ENCODE measurements at regions of chr2 and their contacts with region 1.

Region 1: GRCh38 chr2:164782323-164782722 is 59.3 kb downstream of the COBLL1 start:
- DNase-seq: peak; percentile 54
- H3K4me3 ChIP-seq: no peak overlapping the region
- H3K27ac ChIP-seq: no peak overlapping the region
- H3K4me1 ChIP-seq: peaks cover 42% of the 10 kb centered on the region
- H3K27me3 ChIP-seq: no peaks in the 10 kb centered on the region
- CTCF ChIP-seq: no peak
- POLR2A ChIP-seq: no peak

Region 2: DNA sequence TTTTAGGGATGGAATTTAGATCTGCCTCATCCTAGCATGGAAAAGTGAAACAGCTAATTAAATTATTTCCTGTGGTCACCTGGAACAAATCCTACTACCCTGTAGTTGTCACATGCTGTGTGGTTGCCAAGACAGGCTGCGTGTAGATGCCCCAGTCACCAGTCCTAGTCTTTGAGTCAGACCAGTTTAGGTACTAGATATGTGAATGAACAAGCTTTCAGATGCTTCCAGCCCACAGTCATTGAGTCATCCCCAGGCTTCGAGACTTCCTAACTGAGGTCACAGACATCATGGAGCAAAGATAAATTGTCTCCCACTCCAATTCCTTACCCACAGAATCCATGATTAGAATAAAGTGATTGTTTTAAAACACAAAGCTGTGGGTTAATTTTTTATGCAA is 125.2 kb before region 1 on chr2:
- CTCF ChIA-PET with region 1: no interaction called
- POLR2A ChIA-PET with region 1: no interaction called
- dilution Hi-C with region 1: no loop called
- intact Hi-C with region 1: no loop called
- DNase-seq: no peak
- H3K4me3 ChIP-seq: no peak overlapping the region
- H3K27ac ChIP-seq: no peak overlapping the region
- H3K4me1 ChIP-seq: peaks cover 5% of the 10 kb centered on the region
- H3K27me3 ChIP-seq: no peaks in the 10 kb centered on the region
- CTCF ChIP-seq: no peak
- POLR2A ChIP-seq: no peak

Region 3: GRCh38 chr2:164770421-164770916 is 11.9 kb before region 1 on chr2:
- CTCF ChIA-PET with region 1: interaction called, 4 read pairs
- POLR2A ChIA-PET with region 1: no interaction called
- dilution Hi-C with region 1: no loop called
- intact Hi-C with region 1: loop called (anchors 1 kb)
- DNase-seq: peak; percentile 84
- H3K4me3 ChIP-seq: peak overlapping the region in 1 of 3 experiments; percentile 55
- H3K27ac ChIP-seq: peak overlapping the region; percentile 67
- H3K4me1 ChIP-seq: peaks cover 18% of the 10 kb centered on the region
- H3K27me3 ChIP-seq: no peaks in the 10 kb centered on the region
- CTCF ChIP-seq: no peak
- POLR2A ChIP-seq: peak; percentile 54

Region 4: DNA sequence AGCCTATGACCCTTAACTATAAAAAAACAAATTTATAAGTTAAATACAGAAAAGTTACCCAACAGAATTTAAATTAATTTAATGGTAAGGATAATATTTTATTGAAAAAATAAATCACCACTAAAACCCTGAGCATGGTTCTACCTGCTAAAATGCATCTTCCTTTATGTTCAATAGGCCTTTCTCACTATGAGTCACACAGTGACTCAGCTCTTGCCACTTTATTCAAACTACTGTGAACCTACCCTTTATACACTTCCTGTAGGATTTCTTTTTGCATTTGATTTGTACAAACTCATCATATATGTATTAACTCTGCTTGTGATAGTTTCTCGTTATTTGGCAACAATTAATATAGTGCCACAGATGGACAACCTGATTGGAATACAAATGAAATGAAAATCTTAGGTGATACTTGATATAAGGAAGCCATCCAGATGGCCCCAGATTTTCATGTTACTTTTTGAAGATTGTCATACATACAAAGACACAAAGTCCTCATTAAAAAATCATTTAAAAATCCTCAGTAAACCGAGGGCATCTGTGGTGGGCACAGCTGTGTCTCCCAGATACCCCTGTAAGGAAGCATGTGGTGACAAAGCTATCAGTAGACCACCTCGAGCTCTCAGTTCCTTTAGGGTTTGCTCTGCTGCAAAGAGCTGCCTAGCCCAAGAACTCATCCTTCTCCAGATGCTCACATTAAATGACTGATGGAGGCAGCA is 114.5 kb after region 1 on chr2:
- CTCF ChIA-PET with region 1: no interaction called
- POLR2A ChIA-PET with region 1: no interaction called
- dilution Hi-C with region 1: no loop called
- intact Hi-C with region 1: loop called (anchors 5 kb)
- DNase-seq: peak; percentile 82
- H3K4me3 ChIP-seq: no peak overlapping the region
- H3K27ac ChIP-seq: no peak overlapping the region
- H3K4me1 ChIP-seq: peaks cover 24% of the 10 kb centered on the region
- H3K27me3 ChIP-seq: no peaks in the 10 kb centered on the region
- CTCF ChIP-seq: no peak
- POLR2A ChIP-seq: no peak

Region 5: GRCh38 chr2:164937864-164938401 is 155.6 kb after region 1 on chr2:
- CTCF ChIA-PET with region 1: no interaction called
- POLR2A ChIA-PET with region 1: no interaction called
- dilution Hi-C with region 1: no loop called
- intact Hi-C with region 1: no loop called
- DNase-seq: no peak
- H3K4me3 ChIP-seq: no peak overlapping the region
- H3K27ac ChIP-seq: no peak overlapping the region
- H3K4me1 ChIP-seq: no peaks in the 10 kb centered on the region
- H3K27me3 ChIP-seq: no peaks in the 10 kb centered on the region
- CTCF ChIP-seq: no peak
- POLR2A ChIP-seq: no peak

Region 6: DNA sequence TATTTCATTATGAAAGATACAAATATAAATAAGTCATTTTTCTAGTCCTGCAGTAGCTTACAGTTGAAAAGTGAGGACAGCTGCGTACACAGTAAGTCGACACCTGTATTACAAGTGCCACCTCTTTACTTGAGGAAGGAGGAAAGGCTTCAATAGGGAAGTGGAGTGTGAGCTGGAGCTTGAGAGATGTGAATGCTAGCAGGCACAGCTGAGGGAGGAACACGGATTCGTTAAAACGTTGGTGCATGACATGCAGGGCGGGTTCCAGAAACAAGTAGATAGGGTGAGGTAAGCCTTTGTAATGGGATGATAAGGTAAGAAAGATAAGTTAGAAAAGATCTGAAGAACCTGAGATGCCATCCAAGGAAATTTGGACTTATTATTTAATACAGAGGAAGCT is 589.0 kb after region 1 on chr2:
- CTCF ChIA-PET with region 1: no interaction called
- POLR2A ChIA-PET with region 1: no interaction called
- dilution Hi-C with region 1: no loop called
- intact Hi-C with region 1: loop called (anchors 10 kb)
- DNase-seq: no peak
- H3K4me3 ChIP-seq: no peak overlapping the region
- H3K27ac ChIP-seq: no peak overlapping the region
- H3K4me1 ChIP-seq: no peaks in the 10 kb centered on the region
- H3K27me3 ChIP-seq: no peaks in the 10 kb centered on the region
- CTCF ChIP-seq: no peak
- POLR2A ChIP-seq: no peak